Activated B cell treated with CpG ODN at 0.5 μM for 24 hours (primary cell): ENCODE measurements at regions of chr11 and their contacts with region 1.

Region 1: GRCh38 chr11:114262681-114263512 is 33.3 kb upstream of the NNMT start:
- DNase-seq: no peak
- ATAC-seq: no peak
- H3K4me3 Mint-ChIP-seq: no peak overlapping the region
- H3K27ac Mint-ChIP-seq: no peak overlapping the region
- H3K4me1 Mint-ChIP-seq: peaks cover 31% of the 10 kb centered on the region
- H3K27me3 Mint-ChIP-seq: peaks cover 5% of the 10 kb centered on the region
- CTCF ChIP-seq: no peak

Region 2: GRCh38 chr11:112588252-112588694 is 1674.6 kb before region 1 on chr11:
- CTCF ChIA-PET with region 1: interaction called, 6 read pairs
- POLR2A ChIA-PET with region 1: no interaction called
- intact Hi-C with region 1: loop called (anchors 5 kb)
- DNase-seq: no peak
- ATAC-seq: no peak
- H3K4me3 Mint-ChIP-seq: no peak overlapping the region
- H3K27ac Mint-ChIP-seq: no peak overlapping the region
- H3K4me1 Mint-ChIP-seq: no peaks in the 10 kb centered on the region
- H3K27me3 Mint-ChIP-seq: peaks cover 2% of the 10 kb centered on the region
- CTCF ChIP-seq: peak; percentile 35

Region 3: DNA sequence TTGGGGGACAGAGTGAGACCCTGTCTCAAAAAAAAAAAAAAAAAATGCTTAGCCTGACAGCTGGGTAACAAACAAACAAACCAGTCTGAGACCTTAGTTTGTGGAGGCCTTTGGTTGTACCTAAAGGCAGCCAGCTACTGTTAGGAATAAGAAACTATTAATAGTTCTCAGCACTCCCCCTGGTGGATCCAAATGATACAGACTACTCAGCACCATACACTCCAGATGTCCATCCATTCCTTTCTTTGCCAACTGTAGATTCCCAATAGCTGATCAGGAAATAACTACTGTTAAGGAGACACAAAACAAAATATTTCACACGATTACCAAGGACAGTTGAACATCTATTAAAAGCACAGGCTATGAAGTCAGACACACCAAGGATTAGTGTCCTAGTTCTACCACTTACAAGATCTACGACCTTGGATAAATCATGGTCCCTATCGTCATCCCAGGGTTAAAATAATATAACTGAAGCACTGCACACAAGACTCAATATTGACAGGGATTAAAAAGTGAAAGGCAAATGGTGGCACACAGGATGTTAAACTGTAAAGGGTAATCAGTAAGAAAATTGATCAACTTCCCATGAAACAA is 466.1 kb before region 1 on chr11:
- CTCF ChIA-PET with region 1: interaction called, 19 read pairs
- POLR2A ChIA-PET with region 1: no interaction called
- intact Hi-C with region 1: no loop called
- DNase-seq: no peak
- ATAC-seq: peak; percentile 60
- H3K4me3 Mint-ChIP-seq: no peak overlapping the region
- H3K27ac Mint-ChIP-seq: no peak overlapping the region
- H3K4me1 Mint-ChIP-seq: no peaks in the 10 kb centered on the region
- H3K27me3 Mint-ChIP-seq: no peaks in the 10 kb centered on the region
- CTCF ChIP-seq: peak; percentile 32

Region 4: DNA sequence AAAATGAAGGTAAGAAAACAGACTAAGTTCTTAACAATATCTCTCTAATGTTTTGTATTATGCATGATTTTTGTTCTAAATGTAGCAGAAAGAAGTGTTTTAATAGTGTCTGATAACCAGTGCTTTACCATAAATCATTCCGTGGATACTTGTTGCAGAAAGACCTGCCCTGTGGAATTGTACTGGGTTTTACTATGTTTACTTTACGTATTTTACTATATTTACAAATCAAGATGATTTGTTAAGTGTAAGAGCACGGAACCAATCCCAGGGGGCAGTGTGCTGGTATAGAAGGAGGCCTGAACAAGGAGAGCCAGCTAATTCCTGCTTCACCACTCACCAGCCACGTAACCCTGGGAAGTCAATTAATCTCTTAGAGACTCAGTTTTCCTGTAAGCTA is 356.9 kb before region 1 on chr11:
- CTCF ChIA-PET with region 1: interaction called, 13 read pairs
- POLR2A ChIA-PET with region 1: no interaction called
- intact Hi-C with region 1: no loop called
- DNase-seq: no peak
- ATAC-seq: no peak
- H3K4me3 Mint-ChIP-seq: no peak overlapping the region
- H3K27ac Mint-ChIP-seq: no peak overlapping the region
- H3K4me1 Mint-ChIP-seq: peaks cover 5% of the 10 kb centered on the region
- H3K27me3 Mint-ChIP-seq: peaks cover 5% of the 10 kb centered on the region
- CTCF ChIP-seq: no peak

Region 5: GRCh38 chr11:114026355-114026754 is 236.5 kb before region 1 on chr11:
- CTCF ChIA-PET with region 1: interaction called, 25 read pairs
- POLR2A ChIA-PET with region 1: no interaction called
- intact Hi-C with region 1: no loop called
- DNase-seq: no peak
- ATAC-seq: peak; percentile 37
- H3K4me3 Mint-ChIP-seq: no peak overlapping the region
- H3K27ac Mint-ChIP-seq: no peak overlapping the region
- H3K4me1 Mint-ChIP-seq: no peaks in the 10 kb centered on the region
- H3K27me3 Mint-ChIP-seq: peaks cover 13% of the 10 kb centered on the region
- CTCF ChIP-seq: no peak

Region 6: DNA sequence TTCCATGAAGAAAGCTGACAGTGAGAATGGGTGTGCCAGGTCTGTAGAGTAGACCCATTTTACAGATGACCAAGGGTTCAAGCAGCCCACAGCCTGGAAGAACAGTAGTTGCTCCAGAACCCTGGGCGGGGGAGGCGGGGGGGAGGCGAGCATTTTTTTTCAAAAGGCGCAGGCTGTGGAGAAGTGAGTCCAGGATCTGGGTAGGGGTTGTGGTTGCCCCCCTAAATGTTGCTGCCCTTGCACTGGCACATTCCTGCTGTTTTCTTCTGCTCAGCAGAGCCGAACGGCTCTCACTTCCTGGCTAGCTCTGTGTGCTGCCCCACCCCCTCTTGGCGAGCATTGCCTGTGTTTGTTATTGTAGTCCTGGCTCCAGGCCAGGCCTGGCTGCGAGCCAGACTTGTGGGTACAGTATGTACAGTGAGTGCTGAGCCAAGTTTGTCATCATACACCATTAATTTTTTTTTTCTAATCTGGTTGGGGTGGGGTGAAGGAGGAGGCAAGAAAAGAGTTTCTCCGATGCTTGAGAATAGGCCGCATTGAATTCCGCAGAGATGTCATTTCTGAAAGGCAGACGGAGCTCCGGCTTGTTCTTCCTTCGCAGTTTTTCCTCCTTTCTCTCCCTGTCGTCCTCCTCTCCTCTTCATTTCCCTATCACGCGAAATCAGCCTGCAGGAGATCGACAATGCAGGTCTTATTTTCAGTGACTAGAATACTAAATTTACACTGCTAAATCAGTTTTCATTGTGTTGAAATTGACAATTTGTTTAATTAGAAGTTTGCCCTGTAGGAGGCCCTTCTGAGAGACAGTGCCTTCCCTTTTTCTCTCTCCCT is 102.9 kb before region 1 on chr11:
- CTCF ChIA-PET with region 1: interaction called, 16 read pairs
- POLR2A ChIA-PET with region 1: interaction called, 13 read pairs
- intact Hi-C with region 1: loop called (anchors 1 kb)
- DNase-seq: peak; percentile 79
- ATAC-seq: peak; percentile 95
- H3K4me3 Mint-ChIP-seq: peak overlapping the region; percentile 62
- H3K27ac Mint-ChIP-seq: peak overlapping the region; percentile 82
- H3K4me1 Mint-ChIP-seq: peaks cover 72% of the 10 kb centered on the region
- H3K27me3 Mint-ChIP-seq: no peaks in the 10 kb centered on the region
- CTCF ChIP-seq: no peak

Region 7: GRCh38 chr11:114239753-114240161 is 23.1 kb before region 1 on chr11:
- CTCF ChIA-PET with region 1: no interaction called
- POLR2A ChIA-PET with region 1: no interaction called
- intact Hi-C with region 1: no loop called
- DNase-seq: no peak
- ATAC-seq: no peak
- H3K4me3 Mint-ChIP-seq: no peak overlapping the region
- H3K27ac Mint-ChIP-seq: no peak overlapping the region
- H3K4me1 Mint-ChIP-seq: no peaks in the 10 kb centered on the region
- H3K27me3 Mint-ChIP-seq: peaks cover 2% of the 10 kb centered on the region
- CTCF ChIP-seq: no peak

Region 8: DNA sequence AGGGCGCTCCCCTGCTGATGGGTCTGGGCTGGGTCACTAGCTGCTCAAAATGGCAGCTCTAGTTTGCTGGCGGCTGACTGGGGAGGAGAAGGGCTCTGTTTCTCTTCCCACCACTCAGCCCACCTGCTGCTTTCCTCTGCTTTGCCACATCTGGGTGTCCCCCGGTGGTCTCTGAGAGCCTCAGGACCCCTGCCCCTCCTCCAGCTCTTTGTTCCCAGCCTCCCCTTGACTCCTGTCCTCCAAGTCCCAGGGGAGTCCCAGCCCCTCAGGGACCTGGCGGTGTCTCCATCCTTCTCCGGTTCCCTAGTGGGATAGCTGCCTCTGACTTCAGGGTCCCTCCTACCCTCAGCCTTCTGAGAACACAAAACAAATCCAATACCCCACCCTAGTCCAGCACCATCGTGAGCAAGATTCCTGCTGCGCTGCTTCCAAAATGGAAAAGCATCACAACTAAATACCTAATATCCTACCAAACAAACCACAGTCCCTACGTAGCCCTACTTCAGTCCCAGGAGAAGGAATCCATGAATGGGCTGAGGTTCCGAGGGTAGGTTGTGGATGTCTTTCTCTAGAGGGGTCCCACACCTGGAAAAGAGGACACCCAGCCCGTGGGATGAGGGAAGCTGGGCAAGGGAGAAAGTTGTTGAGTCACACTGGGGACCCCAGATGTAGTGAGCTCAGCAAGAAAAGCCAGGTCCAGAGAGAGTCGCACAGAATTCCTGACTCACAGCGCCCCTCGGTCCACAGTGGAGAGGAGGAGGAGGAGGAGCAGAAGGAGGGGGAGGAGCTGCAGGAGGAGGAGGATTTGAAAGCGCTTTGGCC is 11.7 kb before region 1 on chr11:
- CTCF ChIA-PET with region 1: interaction called, 10 read pairs
- POLR2A ChIA-PET with region 1: no interaction called
- intact Hi-C with region 1: no loop called
- DNase-seq: no peak
- ATAC-seq: no peak
- H3K4me3 Mint-ChIP-seq: no peak overlapping the region
- H3K27ac Mint-ChIP-seq: no peak overlapping the region
- H3K4me1 Mint-ChIP-seq: peaks cover 7% of the 10 kb centered on the region
- H3K27me3 Mint-ChIP-seq: peaks cover 2% of the 10 kb centered on the region
- CTCF ChIP-seq: no peak